ENCODE measurements at regions of chr22 and their contacts with region 1.

Region 1: DNA sequence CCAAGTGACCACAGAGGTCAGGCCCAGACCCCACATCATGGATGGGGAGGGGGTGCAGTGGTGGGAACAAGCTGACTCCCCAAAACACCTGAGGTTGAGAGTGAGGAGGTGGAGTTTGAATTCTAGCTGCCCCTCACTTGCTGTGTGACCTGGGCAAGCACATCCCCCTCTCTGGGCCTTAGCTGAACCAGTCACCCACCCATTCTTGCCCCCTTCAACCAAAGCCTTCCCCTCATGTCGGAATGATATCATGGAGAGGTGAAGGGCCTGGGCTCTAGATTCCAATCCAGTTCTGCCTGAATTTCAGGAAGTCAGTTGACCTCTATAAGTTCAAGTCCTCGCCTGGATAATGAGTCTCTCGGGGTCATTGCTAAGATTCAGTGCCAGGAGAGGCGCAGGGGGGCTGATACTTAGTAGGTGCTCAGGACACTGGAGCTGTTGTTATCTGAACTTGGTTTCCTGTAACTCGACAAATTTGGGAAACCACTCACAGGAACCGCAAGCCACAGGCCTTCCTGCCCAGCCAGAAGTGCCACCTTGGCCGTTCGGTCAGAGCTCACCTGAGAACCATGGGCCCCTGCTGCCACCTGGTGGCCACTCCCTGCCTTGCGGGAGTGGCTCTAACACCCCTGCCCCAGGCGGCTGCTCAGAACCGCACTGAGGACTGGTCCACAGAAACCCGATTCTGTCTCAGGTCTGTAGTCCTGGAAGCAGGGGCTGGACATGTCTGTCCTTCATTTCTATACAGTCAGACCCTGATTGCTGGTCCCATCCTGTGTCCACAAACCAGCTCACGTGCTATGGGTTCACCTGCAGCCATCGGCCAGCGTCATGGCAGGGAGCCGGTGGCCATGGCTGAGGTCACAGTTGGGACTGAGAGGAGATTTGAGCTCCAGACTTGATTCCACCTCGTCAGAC is 6.9 kb downstream of the CDC42EP1 start:
- DNase-seq: peak; percentile 97
- H3K4me3 Mint-ChIP-seq: peak overlapping the region; percentile 54
- H3K27ac Mint-ChIP-seq: peak overlapping the region; percentile 79
- H3K4me1 Mint-ChIP-seq: peaks cover 27% of the 10 kb centered on the region
- H3K27me3 Mint-ChIP-seq: peaks cover 43% of the 10 kb centered on the region

Region 2: GRCh38 chr22:37538590-37539357 is 28.4 kb before region 1 on chr22:
- CTCF ChIA-PET with region 1: interaction called, 374 read pairs
- POLR2A ChIA-PET with region 1: interaction called, 39 read pairs
- DNase-seq: peak; percentile 94
- H3K4me3 Mint-ChIP-seq: no peak overlapping the region
- H3K27ac Mint-ChIP-seq: no peak overlapping the region
- H3K4me1 Mint-ChIP-seq: peaks cover 50% of the 10 kb centered on the region
- H3K27me3 Mint-ChIP-seq: peaks cover 21% of the 10 kb centered on the region

Region 3: GRCh38 chr22:37544955-37545699 is 22.0 kb before region 1 on chr22:
- CTCF ChIA-PET with region 1: interaction called, 374 read pairs
- POLR2A ChIA-PET with region 1: interaction called, 39 read pairs
- DNase-seq: peak; percentile 73
- H3K4me3 Mint-ChIP-seq: no peak overlapping the region
- H3K27ac Mint-ChIP-seq: no peak overlapping the region
- H3K4me1 Mint-ChIP-seq: peaks cover 30% of the 10 kb centered on the region
- H3K27me3 Mint-ChIP-seq: peaks cover 11% of the 10 kb centered on the region

Region 4: DNA sequence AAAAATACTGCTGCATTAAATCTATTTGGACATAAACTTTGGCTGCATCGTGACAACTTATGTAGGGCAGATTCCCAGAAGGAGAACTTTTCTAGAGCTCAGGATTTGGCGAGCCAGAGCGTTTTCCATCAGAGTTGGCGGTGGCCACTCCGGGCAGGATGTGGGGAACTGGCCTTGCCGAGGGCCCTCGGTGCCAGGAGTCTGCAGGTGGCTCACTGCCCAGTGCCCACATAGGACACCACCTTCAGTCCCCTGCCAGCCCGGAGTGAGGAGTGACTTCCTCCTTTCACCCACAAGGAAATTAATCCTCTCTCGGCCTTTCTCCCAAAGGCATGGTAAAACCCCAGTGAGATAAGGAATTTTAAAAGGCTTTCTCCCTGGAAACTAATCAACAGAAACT is 14.3 kb after region 1 on chr22:
- CTCF ChIA-PET with region 1: interaction called, 10 read pairs
- POLR2A ChIA-PET with region 1: interaction called, 5 read pairs
- DNase-seq: no peak
- H3K4me3 Mint-ChIP-seq: no peak overlapping the region
- H3K27ac Mint-ChIP-seq: no peak overlapping the region
- H3K4me1 Mint-ChIP-seq: peaks cover 7% of the 10 kb centered on the region
- H3K27me3 Mint-ChIP-seq: peaks cover 17% of the 10 kb centered on the region

Measured in activated CD4-positive, alpha-beta memory T cell treated with anti-CD3 and anti-CD28 coated beads, Interleukin-2, amount 10 ng/mL, durations not matched to agents 7 days and 5 days (primary cell).